Activated CD4-positive, alpha-beta memory T cell treated with anti-CD3 and anti-CD28 coated beads for 36 hours (primary cell): ENCODE measurements at regions of chr18 and their contacts with region 1.

Region 1: DNA sequence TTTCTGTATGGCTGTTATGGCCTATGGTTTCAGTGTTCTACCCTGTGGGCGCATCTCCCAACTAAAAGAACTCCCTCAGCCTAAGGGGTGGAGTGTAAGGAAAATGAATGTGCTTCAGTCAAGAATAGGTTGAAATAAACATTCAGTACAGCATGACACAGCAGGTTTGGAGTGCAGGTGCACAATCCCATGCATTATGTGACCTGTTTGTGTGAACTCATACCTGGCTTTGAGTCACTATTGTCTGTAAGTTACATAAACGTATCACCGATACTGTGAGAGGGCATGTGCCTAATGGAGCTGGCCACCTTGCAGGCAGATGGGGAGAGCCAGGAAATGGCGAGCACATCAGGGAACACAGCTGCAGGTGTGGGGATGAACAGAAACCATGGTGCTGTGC is 216.0 kb downstream of the DSEL start:
- DNase-seq: peak; percentile 28
- H3K4me3 Mint-ChIP-seq: no peak overlapping the region
- H3K27ac Mint-ChIP-seq: no peak overlapping the region
- H3K4me1 Mint-ChIP-seq: peaks cover 15% of the 10 kb centered on the region
- H3K27me3 Mint-ChIP-seq: no peaks in the 10 kb centered on the region

Region 2: GRCh38 chr18:67265464-67266245 is 34.8 kb before region 1 on chr18:
- CTCF ChIA-PET with region 1: no interaction called
- POLR2A ChIA-PET with region 1: no interaction called
- intact Hi-C with region 1: loop called (anchors 5 kb)
- DNase-seq: no peak
- H3K4me3 Mint-ChIP-seq: no peak overlapping the region
- H3K27ac Mint-ChIP-seq: no peak overlapping the region
- H3K4me1 Mint-ChIP-seq: peaks cover 39% of the 10 kb centered on the region
- H3K27me3 Mint-ChIP-seq: peaks cover 6% of the 10 kb centered on the region